Activated CD8-positive, alpha-beta T cell treated with anti-CD3 and anti-CD28 coated beads for 36 hours (primary cell): ENCODE measurements at regions of chr3 and their contacts with region 1.

Region 1: GRCh38 chr3:17412950-17413530 is 329.4 kb downstream of the TBC1D5 start:
- DNase-seq: peak; percentile 5
- ATAC-seq: peak; percentile 73
- H3K4me3 Mint-ChIP-seq: no peak overlapping the region
- H3K27ac Mint-ChIP-seq: no peak overlapping the region
- H3K4me1 Mint-ChIP-seq: no peaks in the 10 kb centered on the region
- H3K27me3 Mint-ChIP-seq: no peaks in the 10 kb centered on the region
- CTCF ChIP-seq: peak; percentile 81

Region 2: DNA sequence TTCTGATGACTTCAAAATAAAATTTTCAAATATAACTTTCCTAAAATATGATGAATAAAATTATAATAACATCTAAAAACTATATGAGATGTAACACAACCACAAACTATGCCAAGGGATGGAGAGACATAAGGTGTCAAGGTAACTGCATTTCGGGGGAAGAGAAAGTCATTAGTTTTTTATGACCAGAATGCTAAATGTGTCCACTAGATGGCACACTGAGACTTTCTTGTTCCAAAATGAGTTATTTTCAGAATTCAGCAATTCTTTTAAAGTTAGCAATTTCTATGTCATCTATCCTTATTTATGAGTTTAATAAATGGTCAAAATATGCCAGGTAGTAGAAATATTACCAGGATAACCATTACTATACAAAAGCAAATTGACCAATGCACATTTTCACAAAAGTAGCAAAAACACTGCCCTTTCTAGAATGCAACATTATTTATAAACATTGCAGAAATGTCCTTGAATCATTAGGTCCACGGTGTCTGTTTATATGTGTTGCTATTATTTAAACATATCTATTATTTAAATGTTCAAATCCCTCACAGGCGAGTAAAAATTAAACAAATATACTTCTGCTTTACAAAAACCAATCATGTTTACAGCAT is 154.1 kb before region 1 on chr3:
- CTCF ChIA-PET with region 1: interaction called, 19 read pairs
- POLR2A ChIA-PET with region 1: no interaction called
- intact Hi-C with region 1: loop called (anchors 2 kb)
- DNase-seq: peak; percentile 21
- ATAC-seq: no peak
- H3K4me3 Mint-ChIP-seq: no peak overlapping the region
- H3K27ac Mint-ChIP-seq: no peak overlapping the region
- H3K4me1 Mint-ChIP-seq: no peaks in the 10 kb centered on the region
- H3K27me3 Mint-ChIP-seq: no peaks in the 10 kb centered on the region
- CTCF ChIP-seq: peak; percentile 73

Region 3: GRCh38 chr3:17398959-17399551 is 14.0 kb before region 1 on chr3:
- CTCF ChIA-PET with region 1: interaction called, 11 read pairs
- POLR2A ChIA-PET with region 1: no interaction called
- intact Hi-C with region 1: no loop called
- DNase-seq: no peak
- ATAC-seq: no peak
- H3K4me3 Mint-ChIP-seq: no peak overlapping the region
- H3K27ac Mint-ChIP-seq: no peak overlapping the region
- H3K4me1 Mint-ChIP-seq: no peaks in the 10 kb centered on the region
- H3K27me3 Mint-ChIP-seq: no peaks in the 10 kb centered on the region
- CTCF ChIP-seq: no peak